ENCODE measurements at regions of chr1 and their contacts with region 1.

Region 1: GRCh38 chr1:18902523-18903290 is at the start of gene ALDH4A1:
- DNase-seq: peak; percentile 93
- H3K4me3 Mint-ChIP-seq: peak within 1 kb of the TSS; percentile 96
- H3K27ac Mint-ChIP-seq: peak within 1 kb of the TSS; percentile 94
- H3K4me1 Mint-ChIP-seq: peaks cover 47% of the 10 kb centered on the region
- H3K27me3 Mint-ChIP-seq: no peaks in the 10 kb centered on the region
- total RNA-seq, gene ALDH4A1: 3.9 and 4.4 TPM in 2 replicates

Region 2: GRCh38 chr1:18883636-18884418 is 18.9 kb before region 1 on chr1:
- intact Hi-C with region 1: loop called (anchors 1 kb)
- DNase-seq: peak; percentile 49
- H3K4me3 Mint-ChIP-seq: no peak overlapping the region
- H3K27ac Mint-ChIP-seq: no peak overlapping the region
- H3K4me1 Mint-ChIP-seq: no peaks in the 10 kb centered on the region
- H3K27me3 Mint-ChIP-seq: no peaks in the 10 kb centered on the region

Region 3: GRCh38 chr1:18949686-18950400 is 47.1 kb after region 1 on chr1:
- intact Hi-C with region 1: loop called (anchors 1 kb)
- DNase-seq: no peak
- H3K4me3 Mint-ChIP-seq: peak overlapping the region; percentile 89
- H3K27ac Mint-ChIP-seq: peak overlapping the region; percentile 99
- H3K4me1 Mint-ChIP-seq: peaks cover 95% of the 10 kb centered on the region
- H3K27me3 Mint-ChIP-seq: peaks cover 2% of the 10 kb centered on the region

Region 4: DNA sequence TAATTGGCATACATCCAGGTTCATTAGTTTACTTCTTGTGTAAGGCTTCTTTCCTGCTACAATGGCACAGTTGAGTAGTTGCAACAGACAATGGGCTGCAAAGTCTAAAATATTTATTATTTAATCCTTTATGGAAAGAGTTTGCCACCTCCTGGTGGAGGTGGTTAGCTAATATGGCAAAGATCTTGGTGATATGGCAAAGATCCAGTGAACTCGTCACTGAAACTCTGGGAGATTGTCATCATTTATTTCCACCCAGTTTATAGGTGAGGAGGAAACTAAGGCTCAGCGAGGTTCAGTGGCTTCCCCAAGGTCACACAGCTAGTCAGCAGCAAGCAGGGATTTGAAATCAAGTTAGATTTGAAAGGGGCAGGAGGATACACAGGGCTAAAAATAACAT is 69.8 kb after region 1 on chr1:
- intact Hi-C with region 1: loop called (anchors 1 kb)
- DNase-seq: no peak
- H3K4me3 Mint-ChIP-seq: no peak overlapping the region
- H3K27ac Mint-ChIP-seq: no peak overlapping the region
- H3K4me1 Mint-ChIP-seq: no peaks in the 10 kb centered on the region
- H3K27me3 Mint-ChIP-seq: peaks cover 21% of the 10 kb centered on the region

Region 5: DNA sequence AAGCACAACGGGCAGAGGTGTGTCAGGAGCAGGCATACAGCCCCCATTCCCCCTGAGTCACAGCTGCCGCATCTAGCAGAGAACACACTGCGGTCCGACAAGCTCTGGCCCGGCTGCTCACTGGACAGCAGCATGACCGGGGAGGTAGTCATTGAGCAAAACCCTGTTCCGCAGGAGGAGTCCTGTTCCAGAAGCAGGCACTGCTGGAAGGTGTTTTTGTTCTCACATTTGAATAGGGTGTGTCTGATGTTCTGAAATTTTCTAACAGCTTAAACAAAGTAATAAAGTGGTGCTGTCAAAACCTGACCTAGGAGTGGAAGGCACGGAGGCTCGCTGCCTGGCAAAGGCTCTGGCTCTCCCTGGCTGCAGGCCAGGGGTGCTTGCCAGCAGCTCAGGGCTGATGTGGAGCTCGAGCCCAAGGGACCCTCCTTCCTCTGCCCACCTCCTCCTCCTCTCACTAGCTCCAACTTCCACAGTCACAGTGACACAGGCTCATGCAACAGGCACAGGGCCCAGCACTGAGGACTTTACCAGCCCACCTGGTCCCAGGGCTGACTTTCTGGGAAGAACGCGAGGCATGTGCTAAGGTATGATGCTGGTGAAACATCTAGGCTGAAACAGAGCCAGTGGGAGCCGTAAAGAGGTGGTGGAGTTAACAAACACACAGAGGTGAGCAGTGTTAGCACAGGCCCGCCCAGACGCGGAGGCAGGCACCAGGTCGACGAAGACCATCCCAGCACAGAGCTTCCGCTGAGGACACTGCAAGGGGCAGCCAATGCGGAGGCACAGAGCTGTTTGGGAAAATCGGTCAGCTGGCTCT is 172.4 kb after region 1 on chr1:
- intact Hi-C with region 1: loop called (anchors 1 kb)
- DNase-seq: no peak
- H3K4me3 Mint-ChIP-seq: peak overlapping the region; percentile 53
- H3K27ac Mint-ChIP-seq: peak overlapping the region; percentile 61
- H3K4me1 Mint-ChIP-seq: peaks cover 34% of the 10 kb centered on the region
- H3K27me3 Mint-ChIP-seq: peaks cover 4% of the 10 kb centered on the region

Region 6: GRCh38 chr1:19096036-19096833 is 193.5 kb after region 1 on chr1:
- intact Hi-C with region 1: loop called (anchors 1 kb)
- DNase-seq: no peak
- H3K4me3 Mint-ChIP-seq: no peak overlapping the region
- H3K27ac Mint-ChIP-seq: no peak overlapping the region
- H3K4me1 Mint-ChIP-seq: peaks cover 5% of the 10 kb centered on the region
- H3K27me3 Mint-ChIP-seq: no peaks in the 10 kb centered on the region

Region 7: DNA sequence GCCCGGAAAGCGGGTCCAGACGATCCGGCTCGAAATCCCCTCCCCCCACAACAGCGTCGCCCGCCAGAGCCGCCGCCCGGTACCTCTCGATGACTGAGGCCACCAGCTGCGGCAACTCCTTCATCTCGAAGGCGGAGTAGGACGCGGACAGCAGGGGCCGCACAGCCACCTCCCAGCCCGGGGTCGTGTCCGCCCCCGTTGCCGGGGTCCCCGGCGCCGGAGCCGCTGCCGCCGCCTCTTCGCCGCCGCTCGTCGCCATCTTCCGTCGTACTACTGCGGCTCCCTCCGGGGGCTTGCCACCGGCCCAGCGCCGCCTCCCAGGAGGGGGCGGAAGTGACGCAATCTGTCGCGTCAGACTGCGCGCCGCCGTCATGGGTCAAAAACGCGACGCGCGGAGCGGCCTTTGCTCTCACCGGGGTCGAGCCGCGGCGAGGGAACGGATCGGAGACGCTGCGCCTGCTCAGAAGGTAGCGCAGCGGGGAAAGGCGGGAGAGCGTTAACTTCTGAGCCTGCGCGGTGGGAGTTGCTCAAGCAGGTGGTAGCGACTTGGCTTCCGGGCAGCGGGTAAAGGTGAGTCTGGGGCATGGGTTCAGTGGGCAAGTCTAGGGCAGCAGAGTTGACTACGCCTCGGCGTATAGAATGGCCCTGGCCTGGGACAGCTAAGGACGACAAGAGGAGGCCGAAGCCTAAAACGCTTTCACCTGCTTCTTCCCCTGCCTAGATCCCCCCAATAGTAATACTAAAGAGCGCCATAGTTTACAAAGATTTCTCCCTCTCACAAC is 307.5 kb after region 1 on chr1 and contains the start of gene UBR4:
- intact Hi-C with region 1: loop called (anchors 5 kb)
- DNase-seq: peak; percentile 97
- H3K4me3 Mint-ChIP-seq: peak within 1 kb of the TSS; percentile 94
- H3K27ac Mint-ChIP-seq: peak within 1 kb of the TSS; percentile 98
- H3K4me1 Mint-ChIP-seq: peaks cover 63% of the 10 kb centered on the region
- H3K27me3 Mint-ChIP-seq: no peaks in the 10 kb centered on the region
- total RNA-seq, gene UBR4: 155 and 161 TPM in 2 replicates